Ovary (tissue), 10 donors: ENCODE measurements at regions of chr22 and their contacts with region 1.

Region 1: DNA sequence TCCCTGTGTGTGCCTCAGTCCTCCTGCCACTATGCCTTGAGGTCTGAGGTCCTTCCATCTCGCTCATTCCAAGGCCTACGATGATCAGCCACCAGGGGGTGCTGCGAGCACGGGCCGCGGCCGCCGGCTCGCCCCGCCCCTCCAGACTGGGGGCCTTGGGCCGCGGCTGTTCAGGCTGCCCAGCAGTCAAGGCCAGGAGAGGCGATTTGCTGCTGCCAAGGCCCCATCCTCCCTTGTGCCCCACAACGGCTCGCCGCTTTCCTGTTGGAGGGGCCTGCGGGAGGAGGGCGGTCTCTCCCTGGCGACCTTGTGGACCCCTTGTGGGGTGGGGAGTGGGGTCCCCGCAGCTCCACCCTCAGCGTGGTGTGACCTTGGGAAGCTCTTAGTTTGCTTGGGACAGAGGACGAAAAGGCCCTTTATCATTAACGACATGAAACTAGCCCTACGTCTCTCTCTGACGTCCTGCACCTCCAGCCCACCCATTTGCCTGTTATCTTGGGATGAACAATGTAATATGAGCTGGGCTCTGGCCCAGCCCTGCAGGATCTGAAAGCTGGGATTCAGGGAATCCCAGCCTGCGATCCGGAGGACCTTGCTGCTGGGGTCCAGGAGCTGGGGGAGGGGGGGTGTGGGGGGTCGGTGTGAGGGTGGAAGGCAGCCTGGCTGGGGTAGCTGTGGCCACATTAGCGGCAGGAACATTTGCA is 5.3 kb upstream of the GALR3 start:
- DNase-seq: peak; percentile 87 to 95 (median 94)
- H3K4me3 ChIP-seq: peak overlapping the region; percentile 38
- H3K27ac ChIP-seq: peak overlapping the region; percentile 4 to 84
- H3K4me1 ChIP-seq: peaks cover 3% of the 10 kb centered on the region
- H3K27me3 ChIP-seq: no peaks in the 10 kb centered on the region
- CTCF ChIP-seq: peak; percentile 98 to 99 (median 99)
- EP300 ChIP-seq: no peak
- POLR2A ChIP-seq: peak; percentile 38

Region 2: DNA sequence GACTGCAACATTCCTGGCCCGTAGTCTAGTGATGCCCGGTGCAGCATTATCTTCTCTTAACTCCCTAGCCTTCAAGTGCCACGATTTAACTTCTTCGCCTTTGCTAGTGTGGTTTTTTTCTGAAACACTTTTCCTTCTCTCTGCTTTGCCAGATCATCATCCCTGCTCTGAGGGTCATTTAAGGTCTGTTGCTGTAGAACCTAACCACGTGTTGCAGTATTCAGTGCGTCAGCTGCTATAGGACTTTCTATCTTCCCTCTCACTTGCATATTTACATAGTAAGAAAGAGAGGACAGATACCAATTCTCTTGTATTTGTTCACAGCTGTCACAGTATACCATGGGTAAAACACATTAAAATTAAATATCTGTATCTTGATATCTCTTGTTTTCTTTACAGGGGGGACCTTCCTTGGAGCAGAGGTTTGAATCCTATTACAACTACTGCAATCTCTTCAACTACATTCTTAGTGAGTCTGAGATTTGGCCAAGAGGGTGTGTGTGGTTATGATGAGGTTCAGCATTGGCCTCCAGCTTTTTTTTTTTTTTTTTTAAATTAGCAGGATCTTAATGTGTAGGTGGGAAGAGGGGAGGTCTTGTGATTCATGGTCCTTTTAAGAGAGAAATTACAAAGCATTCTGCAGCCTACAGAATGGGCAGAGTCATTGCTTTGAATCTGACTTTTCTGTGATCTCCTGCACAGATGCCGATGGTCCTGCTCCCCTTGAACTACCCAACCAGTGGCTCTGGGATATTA is 44.9 kb after region 1 on chr22:
- intact Hi-C with region 1: loop called (anchors 2 to 5 kb)
- DNase-seq: no peak
- H3K4me3 ChIP-seq: no peak overlapping the region
- H3K27ac ChIP-seq: peak overlapping the region in 1 of 2 donors; percentile 23
- H3K4me1 ChIP-seq: peaks cover 3% of the 10 kb centered on the region
- H3K27me3 ChIP-seq: no peaks in the 10 kb centered on the region
- CTCF ChIP-seq: no peak
- EP300 ChIP-seq: no peak
- POLR2A ChIP-seq: no peak

Region 3: GRCh38 chr22:37920126-37920525 is 102.3 kb after region 1 on chr22:
- intact Hi-C with region 1: loop called in 1 of 4 experiments (anchors 10 kb)
- DNase-seq: no peak
- H3K4me3 ChIP-seq: no peak overlapping the region
- H3K27ac ChIP-seq: no peak overlapping the region
- H3K4me1 ChIP-seq: no peaks in the 10 kb centered on the region
- H3K27me3 ChIP-seq: no peaks in the 10 kb centered on the region
- CTCF ChIP-seq: no peak
- EP300 ChIP-seq: no peak
- POLR2A ChIP-seq: no peak

Region 4: GRCh38 chr22:37933711-37934376 is 116.0 kb after region 1 on chr22:
- intact Hi-C with region 1: loop called in 2 of 4 experiments (anchors 10 kb)
- DNase-seq: peak; percentile 83 to 92 (median 87)
- H3K4me3 ChIP-seq: no peak overlapping the region
- H3K27ac ChIP-seq: peak overlapping the region; percentile 41 to 62
- H3K4me1 ChIP-seq: peaks cover 11% of the 10 kb centered on the region
- H3K27me3 ChIP-seq: no peaks in the 10 kb centered on the region
- CTCF ChIP-seq: peak; percentile 85 to 94 (median 92)
- EP300 ChIP-seq: no peak
- POLR2A ChIP-seq: no peak

Region 5: GRCh38 chr22:37953437-37954179 is 135.8 kb after region 1 on chr22 and contains the starts of genes C22orf23 and POLR2F:
- intact Hi-C with region 1: loop called in 1 of 4 experiments (anchors 5 kb)
- DNase-seq: peak; percentile 95 to 98 (median 96)
- H3K4me3 ChIP-seq: peak within 1 kb of the TSS; percentile 63
- H3K27ac ChIP-seq: peak within 1 kb of the TSS in 1 of 2 donors; percentile 34
- H3K4me1 ChIP-seq: peaks cover 7% of the 10 kb centered on the region
- H3K27me3 ChIP-seq: no peaks in the 10 kb centered on the region
- CTCF ChIP-seq: no peak
- EP300 ChIP-seq: no peak
- POLR2A ChIP-seq: peak; percentile 52
- total RNA-seq, gene C22orf23: 0.28 to 2.6 (median 0.77) TPM
- total RNA-seq, gene POLR2F: 54.8 to 87.9 (median 65.2) TPM

Region 6: DNA sequence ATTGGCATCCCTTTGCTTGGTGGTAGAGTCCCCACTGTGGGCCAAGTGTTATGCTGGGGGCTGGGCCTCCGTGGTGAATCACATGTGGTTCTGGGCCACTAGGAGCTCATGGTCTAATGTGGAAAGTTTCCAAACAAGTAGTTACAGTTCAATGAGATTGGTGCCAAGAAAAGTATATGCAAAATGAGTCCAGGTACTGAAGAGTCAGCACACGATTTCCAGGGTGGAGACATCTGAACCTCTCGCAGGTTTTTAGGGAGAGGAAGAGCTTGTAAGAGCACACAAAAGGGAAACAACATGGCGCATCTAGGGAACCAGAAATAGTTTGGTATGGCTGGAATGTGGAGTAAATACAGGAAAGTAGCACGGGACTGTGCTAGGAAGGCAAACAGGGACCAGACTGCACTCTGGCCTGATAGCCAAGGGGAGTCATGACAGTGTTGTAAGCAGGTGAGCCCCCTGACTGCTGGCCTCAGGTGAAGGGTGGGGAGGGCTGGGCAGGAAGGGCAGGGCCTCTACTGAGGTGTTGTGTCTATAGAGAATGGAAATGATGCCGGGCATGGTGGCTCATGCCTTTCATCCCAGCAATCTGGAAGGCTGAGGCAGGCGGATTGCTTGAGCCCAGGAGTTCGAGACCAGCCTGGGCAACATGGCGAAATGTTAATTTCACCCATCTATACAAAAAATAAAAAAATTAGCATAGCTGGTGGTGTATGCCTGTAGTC is 148.2 kb after region 1 on chr22:
- intact Hi-C with region 1: loop called in 3 of 4 experiments (anchors 5 to 10 kb)
- DNase-seq: no peak
- H3K4me3 ChIP-seq: no peak overlapping the region
- H3K27ac ChIP-seq: no peak overlapping the region
- H3K4me1 ChIP-seq: no peaks in the 10 kb centered on the region
- H3K27me3 ChIP-seq: no peaks in the 10 kb centered on the region
- CTCF ChIP-seq: no peak
- EP300 ChIP-seq: no peak
- POLR2A ChIP-seq: no peak